ENCODE measurements at regions of chr1 and their contacts with region 1.

Region 1: DNA sequence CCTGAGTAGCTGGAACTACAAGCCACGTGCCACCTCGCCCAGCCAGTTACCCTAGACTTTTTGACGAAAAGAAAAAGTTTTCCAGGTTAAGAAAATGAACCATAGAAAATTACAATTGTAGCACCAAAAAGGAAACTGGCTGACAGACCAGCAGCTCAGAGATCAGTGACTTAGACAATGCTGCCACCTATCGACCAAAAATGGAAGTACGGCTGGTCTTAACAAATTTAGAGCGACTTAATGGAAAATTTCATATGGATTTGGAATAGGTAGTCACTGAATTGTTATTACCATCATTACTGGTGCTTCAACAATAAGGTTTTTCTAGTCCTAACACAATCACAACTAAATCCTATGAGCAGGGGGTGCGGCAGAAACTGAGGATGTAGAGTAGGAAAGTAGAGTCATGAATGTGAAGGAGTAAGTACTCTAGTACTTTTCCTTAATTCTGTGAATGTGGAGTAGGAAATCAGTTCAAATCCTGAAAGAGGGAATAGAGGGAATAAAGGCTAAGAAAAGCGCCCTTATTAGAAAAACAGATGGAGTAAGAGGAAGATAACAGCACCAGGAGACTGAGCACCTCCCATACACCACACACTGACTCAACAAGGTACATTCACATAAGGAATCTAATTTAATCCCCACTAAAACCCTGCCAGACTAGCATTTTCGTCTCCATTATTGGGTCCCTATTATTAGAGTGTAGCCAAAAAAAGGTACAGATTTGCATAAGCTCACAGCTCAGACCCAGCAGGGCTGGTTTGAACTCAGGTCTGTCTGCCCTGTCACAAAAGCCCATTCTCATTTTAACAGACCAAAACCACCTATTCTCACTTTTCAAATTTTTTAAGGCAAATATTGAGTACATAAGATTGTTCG is 37.9 kb upstream of the MGST3 start:
- DNase-seq: no peak
- H3K4me3 ChIP-seq: no peak overlapping the region
- H3K27ac ChIP-seq: no peak overlapping the region
- H3K4me1 ChIP-seq: peaks cover 6% of the 10 kb centered on the region
- H3K27me3 ChIP-seq: no peaks in the 10 kb centered on the region
- CTCF ChIP-seq: peak; percentile 81 to 97 (median 96)
- POLR2A ChIP-seq: no peak

Region 2: DNA sequence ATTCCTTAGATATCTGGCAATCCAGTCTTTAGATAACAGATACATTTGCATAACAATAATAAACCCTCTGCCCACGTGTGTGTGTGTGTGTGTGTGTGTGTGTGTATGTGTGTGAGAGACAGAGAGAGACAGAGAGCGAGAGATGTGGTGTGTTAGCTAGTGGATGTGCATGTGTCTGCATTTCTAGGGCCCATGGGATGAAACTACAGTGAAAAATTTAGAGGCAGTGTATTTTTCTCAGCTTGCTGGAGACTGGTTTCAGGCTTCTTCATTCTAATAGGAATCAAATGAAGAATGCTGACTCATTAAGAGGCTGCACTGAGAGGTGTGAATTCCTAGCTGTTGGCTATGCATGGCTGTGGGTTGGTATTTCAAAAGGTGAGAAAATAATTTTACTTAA is 539.8 kb before region 1 on chr1:
- intact Hi-C with region 1: no loop called
- DNase-seq: no peak
- H3K4me3 ChIP-seq: no peak overlapping the region
- H3K27ac ChIP-seq: no peak overlapping the region
- H3K4me1 ChIP-seq: no peaks in the 10 kb centered on the region
- H3K27me3 ChIP-seq: no peaks in the 10 kb centered on the region
- CTCF ChIP-seq: no peak
- POLR2A ChIP-seq: no peak

Region 3: DNA sequence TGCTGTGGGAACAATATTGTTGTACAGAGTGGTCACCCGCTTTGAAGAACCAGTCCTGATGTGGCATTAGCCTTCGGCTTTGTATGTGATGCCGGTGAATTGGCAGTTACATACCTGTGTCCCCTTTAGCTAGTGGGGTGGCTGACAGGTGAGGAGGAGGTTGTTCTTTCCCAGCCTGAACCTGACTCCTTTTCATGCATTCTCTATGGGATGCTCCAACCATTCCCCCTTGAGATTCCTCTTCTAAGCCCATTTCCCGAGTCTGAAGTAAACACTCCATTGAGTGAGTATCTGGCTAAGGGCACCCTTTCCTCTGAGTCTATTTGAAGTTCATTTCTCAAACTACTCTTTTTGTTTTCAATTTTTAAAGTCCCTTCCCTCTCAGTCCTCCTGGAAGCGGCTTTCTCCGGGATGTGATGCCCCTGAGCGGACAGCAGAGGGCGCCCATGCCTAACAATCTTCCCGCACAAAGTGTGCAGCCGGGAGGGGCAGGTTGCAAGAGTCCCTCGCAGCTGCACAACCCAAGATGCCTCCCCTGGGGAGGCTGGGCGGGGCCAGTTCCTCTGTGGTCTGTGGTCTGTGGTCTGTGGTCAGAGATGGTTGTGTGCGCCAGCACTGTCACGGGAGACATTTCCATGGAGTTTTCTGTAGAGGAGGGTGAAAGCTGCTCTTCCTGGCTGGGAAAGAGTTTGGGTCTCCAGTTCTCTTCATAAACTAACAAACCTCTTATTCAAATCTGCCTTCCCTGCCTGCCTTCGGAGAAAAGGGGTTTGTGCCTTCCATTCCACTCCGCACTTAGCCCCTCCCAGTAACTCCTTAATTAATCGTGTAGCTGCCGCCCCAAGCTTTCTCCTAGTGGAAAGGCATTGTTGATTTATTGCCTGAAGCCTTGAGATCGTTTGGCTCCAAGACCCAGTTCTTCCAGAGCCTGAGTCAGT is 200.3 kb before region 1 on chr1:
- intact Hi-C with region 1: loop called (anchors 5 kb)
- DNase-seq: peak in 1 of 2 donors; percentile 91
- H3K4me3 ChIP-seq: peak overlapping the region in 1 of 2 donors; percentile 16
- H3K27ac ChIP-seq: peak overlapping the region; percentile 46
- H3K4me1 ChIP-seq: peaks cover 7% of the 10 kb centered on the region
- H3K27me3 ChIP-seq: no peaks in the 10 kb centered on the region
- CTCF ChIP-seq: peak; percentile 77 to 94 (median 86)
- POLR2A ChIP-seq: no peak

Region 4: GRCh38 chr1:165408518-165408917 is 184.7 kb before region 1 on chr1:
- intact Hi-C with region 1: loop called (anchors 5 kb)
- DNase-seq: no peak
- H3K4me3 ChIP-seq: no peak overlapping the region
- H3K27ac ChIP-seq: no peak overlapping the region
- H3K4me1 ChIP-seq: no peaks in the 10 kb centered on the region
- H3K27me3 ChIP-seq: no peaks in the 10 kb centered on the region
- CTCF ChIP-seq: peak in 1 of 3 experiments; percentile 4
- POLR2A ChIP-seq: no peak

Region 5: DNA sequence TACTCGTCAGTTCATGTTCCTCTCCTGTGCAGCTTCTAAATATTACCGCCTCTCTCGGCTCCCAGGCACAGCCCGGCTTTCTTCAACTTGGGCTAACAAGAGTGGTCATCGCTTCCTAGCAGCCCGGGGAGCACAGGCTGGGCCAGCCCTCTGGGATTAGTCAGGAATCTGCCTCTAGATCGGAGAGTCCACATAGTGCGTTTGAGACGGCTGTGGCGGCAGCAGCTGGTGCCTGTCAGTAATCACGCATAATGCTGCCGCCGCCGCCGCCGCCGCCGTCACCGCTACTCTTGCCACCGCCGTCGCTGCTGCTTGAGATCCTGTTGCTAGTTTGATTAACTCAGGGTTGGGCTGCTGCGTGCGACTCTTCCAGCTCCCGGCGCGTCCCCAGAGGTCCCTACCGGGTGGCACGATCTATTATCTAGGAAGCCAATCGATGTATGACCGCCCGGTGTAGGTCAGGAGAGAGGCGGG is 148.2 kb before region 1 on chr1 and contains the start of gene RXRG:
- intact Hi-C with region 1: no loop called
- DNase-seq: peak in 1 of 2 donors; percentile 70
- H3K4me3 ChIP-seq: peak within 1 kb of the TSS; percentile 14 to 27
- H3K27ac ChIP-seq: peak within 1 kb of the TSS; percentile 5
- H3K4me1 ChIP-seq: no peaks in the 10 kb centered on the region
- H3K27me3 ChIP-seq: no peaks in the 10 kb centered on the region
- CTCF ChIP-seq: no peak
- POLR2A ChIP-seq: no peak
- total RNA-seq, gene RXRG: not detected

Region 6: GRCh38 chr1:165512812-165513211 is 80.4 kb before region 1 on chr1:
- intact Hi-C with region 1: no loop called
- DNase-seq: no peak
- H3K4me3 ChIP-seq: no peak overlapping the region
- H3K27ac ChIP-seq: no peak overlapping the region
- H3K4me1 ChIP-seq: no peaks in the 10 kb centered on the region
- H3K27me3 ChIP-seq: no peaks in the 10 kb centered on the region
- CTCF ChIP-seq: no peak
- POLR2A ChIP-seq: no peak

Region 7: DNA sequence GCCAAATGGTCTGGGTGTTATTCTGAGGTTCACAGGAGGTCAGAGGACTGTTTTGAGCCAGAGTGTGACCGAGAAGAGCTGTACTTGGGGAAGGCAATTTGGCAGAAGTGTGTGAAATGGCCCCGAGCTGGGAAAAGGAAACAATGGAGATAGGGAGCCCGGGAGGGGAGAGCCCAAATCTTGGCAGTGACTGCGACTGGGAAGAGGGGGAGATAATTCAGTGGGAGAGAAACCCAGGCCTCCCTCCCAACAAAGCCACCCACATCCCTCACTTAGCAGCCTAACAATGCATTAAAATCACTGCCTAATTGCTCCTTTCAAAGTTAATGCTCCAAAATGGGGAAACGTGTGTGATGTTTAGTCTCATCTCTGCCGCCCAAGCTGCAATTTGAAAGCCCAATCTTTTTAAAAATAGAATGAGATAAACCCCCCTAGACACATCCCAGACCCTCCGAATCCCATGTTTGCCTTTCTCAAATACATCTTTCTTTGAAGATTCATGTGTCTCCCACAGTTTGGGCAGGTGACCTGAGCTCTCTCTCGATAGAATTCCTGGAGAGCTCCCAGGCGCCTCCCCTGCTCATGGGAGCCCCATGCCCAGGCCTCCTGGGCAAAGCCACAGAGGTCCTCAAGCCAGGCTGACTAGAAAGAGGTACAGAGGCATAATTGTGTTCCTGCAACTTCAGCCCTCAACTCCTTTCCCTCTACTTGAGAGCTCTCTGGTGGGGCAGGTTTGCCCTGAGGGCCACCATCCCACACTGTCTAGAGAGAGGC is 32.1 kb before region 1 on chr1:
- intact Hi-C with region 1: no loop called
- DNase-seq: no peak
- H3K4me3 ChIP-seq: no peak overlapping the region
- H3K27ac ChIP-seq: no peak overlapping the region
- H3K4me1 ChIP-seq: no peaks in the 10 kb centered on the region
- H3K27me3 ChIP-seq: no peaks in the 10 kb centered on the region
- CTCF ChIP-seq: no peak
- POLR2A ChIP-seq: no peak

Measured in vagina (tissue), 2 donors.